ENCODE measurements at regions of chr2 and their contacts with region 1.

Region 1: DNA sequence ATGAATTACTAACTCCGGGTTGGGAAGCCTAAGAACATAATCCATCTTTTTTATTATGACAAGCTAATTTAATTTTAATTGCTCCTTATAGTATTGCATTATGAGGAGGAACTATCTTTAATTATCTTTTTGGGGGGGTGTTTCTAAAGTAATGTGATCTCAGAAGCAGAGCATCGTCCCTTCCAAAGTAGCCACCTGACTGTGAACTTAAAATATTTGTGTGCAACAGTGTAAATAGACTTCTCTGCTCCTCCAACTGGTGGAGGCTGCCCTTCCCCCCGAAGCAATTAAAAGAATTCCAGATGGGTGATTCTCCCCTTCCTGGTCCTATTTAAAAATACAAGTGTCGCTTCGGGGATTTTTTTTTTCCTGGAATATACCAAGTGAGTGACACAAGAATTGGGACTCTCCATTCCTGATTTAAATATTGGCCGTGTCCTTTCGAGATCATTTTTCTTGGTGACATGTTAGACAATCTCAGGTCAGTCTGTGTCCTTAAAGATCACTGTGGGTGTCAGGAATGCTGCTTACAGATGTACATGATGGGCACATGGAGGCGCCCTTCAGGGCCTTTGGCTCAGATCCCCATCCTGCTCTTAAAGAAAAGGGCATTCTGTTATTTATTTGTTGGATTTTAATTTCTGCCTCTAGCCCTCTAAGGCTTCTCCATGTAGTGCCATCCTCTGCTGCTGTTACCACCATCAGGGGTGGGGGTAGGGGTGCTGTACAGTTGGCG is 55.8 kb downstream of the TCF7L1 start:
- DNase-seq: no peak
- H3K4me3 ChIP-seq: no peak overlapping the region
- H3K27ac ChIP-seq: no peak overlapping the region
- H3K4me1 ChIP-seq: peaks cover 2 to 9% (median 6%) of the 10 kb centered on the region in 4 experiments; a peak in 5 of 7 replicates
- H3K27me3 ChIP-seq: no peaks in the 10 kb centered on the region
- CTCF ChIP-seq: peak; percentile 14 to 30 (median 24)
- EP300 ChIP-seq: no peak
- POLR2A ChIP-seq: no peak
- RAD21 ChIP-seq: peak; percentile 16 to 35; a peak in 2 of 4 replicates

Region 2: DNA sequence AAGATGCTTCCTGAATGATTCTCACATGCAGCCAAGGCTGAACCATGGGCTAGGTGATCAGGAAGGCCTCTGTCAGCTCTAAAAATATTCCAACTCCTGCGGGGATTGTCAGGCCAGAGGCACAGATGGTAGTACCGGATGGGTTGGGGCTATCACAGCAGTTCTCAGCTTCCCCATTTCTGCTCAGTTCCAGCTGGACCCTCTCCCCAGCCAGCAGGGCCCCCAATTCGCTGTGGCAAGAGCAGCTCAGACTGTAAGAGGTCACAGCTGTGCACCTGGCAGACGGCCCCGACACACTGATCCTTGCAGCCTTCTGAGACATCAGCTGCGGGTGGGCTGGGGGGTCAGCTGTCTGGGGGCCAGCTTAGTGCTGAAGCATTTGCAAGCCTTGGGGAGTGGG is 99.4 kb before region 1 on chr2:
- CTCF ChIA-PET with region 1: no interaction called
- POLR2A ChIA-PET with region 1: no interaction called
- DNase-seq: peak in 1 of 2 experiments; percentile 52
- H3K4me3 ChIP-seq: peak overlapping the region in 2 of 4 experiments; percentile 3 to 20; a peak in 2 of 8 replicates
- H3K27ac ChIP-seq: 0 out of 2 replicates have a peak overlapping the region, but pooled peaks have one; percentile 5
- H3K4me1 ChIP-seq: peaks cover 3 to 18% (median 9%) of the 10 kb centered on the region in 4 experiments
- H3K27me3 ChIP-seq: no peaks in the 10 kb centered on the region
- CTCF ChIP-seq: no peak
- EP300 ChIP-seq: no peak
- POLR2A ChIP-seq: no peak
- RAD21 ChIP-seq: no peak

Region 3: GRCh38 chr2:85111101-85111500 is 77.9 kb before region 1 on chr2:
- CTCF ChIA-PET with region 1: no interaction called
- POLR2A ChIA-PET with region 1: no interaction called
- DNase-seq: no peak
- H3K4me3 ChIP-seq: no peak overlapping the region
- H3K27ac ChIP-seq: no peak overlapping the region
- H3K4me1 ChIP-seq: no peaks in the 10 kb centered on the region
- H3K27me3 ChIP-seq: peaks cover 0 to 6% (median 0%) of the 10 kb centered on the region in 4 experiments; a peak in 4 of 7 replicates
- CTCF ChIP-seq: no peak
- EP300 ChIP-seq: no peak
- POLR2A ChIP-seq: no peak
- RAD21 ChIP-seq: no peak

Region 4: GRCh38 chr2:85156153-85156552 is 32.9 kb before region 1 on chr2:
- CTCF ChIA-PET with region 1: interaction called, 46 read pairs
- POLR2A ChIA-PET with region 1: interaction called, 6 read pairs
- DNase-seq: no peak
- H3K4me3 ChIP-seq: no peak overlapping the region
- H3K27ac ChIP-seq: no peak overlapping the region
- H3K4me1 ChIP-seq: peaks cover 2 to 18% (median 10%) of the 10 kb centered on the region in 4 experiments; a peak in 6 of 7 replicates
- H3K27me3 ChIP-seq: no peaks in the 10 kb centered on the region
- CTCF ChIP-seq: no peak
- EP300 ChIP-seq: no peak
- POLR2A ChIP-seq: no peak
- RAD21 ChIP-seq: no peak

Region 5: GRCh38 chr2:85199698-85200097 is 10.7 kb after region 1 on chr2:
- CTCF ChIA-PET with region 1: interaction called, 53 read pairs
- POLR2A ChIA-PET with region 1: interaction called, 10 read pairs
- DNase-seq: no peak
- H3K4me3 ChIP-seq: no peak overlapping the region
- H3K27ac ChIP-seq: no peak overlapping the region
- H3K4me1 ChIP-seq: no peaks in the 10 kb centered on the region; a peak in 1 of 7 replicates
- H3K27me3 ChIP-seq: no peaks in the 10 kb centered on the region
- CTCF ChIP-seq: no peak
- EP300 ChIP-seq: no peak
- POLR2A ChIP-seq: no peak
- RAD21 ChIP-seq: no peak